ENCODE measurements at regions of chr3 and their contacts with region 1.

Region 1: GRCh38 chr3:53202331-53203015 is 41.5 kb downstream of the PRKCD start:
- DNase-seq: no peak
- H3K4me3 ChIP-seq: no peak overlapping the region
- H3K27ac ChIP-seq: no peak overlapping the region
- H3K4me1 ChIP-seq: no peaks in the 10 kb centered on the region
- H3K27me3 ChIP-seq: no peaks in the 10 kb centered on the region
- CTCF ChIP-seq: no peak
- EP300 ChIP-seq: no peak
- POLR2A ChIP-seq: no peak

Region 2: DNA sequence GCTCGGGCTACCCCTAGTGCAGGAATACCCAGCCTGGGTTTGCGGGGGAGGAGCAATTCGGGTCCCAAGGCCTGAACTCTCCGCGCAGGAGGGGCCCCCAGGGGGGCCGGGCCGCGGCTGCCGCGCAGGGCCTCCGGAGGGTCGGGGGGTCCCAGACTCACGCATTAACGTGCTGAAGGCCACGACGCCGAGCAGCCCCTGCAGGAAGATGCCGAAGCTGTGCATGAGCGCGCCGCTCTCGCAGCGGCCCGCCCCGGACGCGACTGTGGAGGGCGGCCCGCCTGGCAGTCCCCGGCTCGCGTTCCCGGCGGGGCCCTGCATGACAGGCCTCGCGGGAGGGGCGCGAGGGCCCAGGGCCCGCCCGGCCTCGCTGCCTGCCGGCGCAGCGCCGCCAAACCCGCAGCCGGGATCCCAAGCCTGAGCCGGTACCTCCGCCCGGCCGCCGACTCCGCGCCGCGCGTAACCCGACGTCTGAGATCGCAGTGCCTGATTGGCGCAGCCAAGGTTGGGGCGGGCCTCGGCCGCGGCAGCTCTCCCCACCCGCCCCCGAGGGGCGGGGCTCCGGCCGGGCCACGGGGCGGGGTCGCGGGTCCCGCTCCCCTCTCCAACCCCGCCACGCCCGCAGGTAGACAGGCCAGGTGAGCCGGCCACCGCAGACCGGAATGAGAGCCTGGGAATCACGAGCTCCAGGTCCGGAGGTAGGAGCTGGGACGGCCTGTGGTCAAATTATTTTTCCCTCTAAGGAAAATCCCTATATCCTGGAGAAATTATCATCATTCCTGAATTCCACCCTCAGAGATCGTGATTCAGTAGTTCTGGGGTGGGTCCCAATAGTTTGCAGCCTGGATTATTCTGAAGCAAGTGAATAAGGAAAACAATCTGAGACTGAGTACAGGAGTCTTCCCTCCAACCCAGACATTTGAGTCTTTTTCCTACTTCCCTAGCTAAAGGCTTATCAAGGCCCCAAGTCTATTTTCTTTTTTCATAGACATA is 305.0 kb before region 1 on chr3 and contains the start of gene STIMATE:
- intact Hi-C with region 1: no loop called
- DNase-seq: peak; percentile 92 to 96
- H3K4me3 ChIP-seq: peak within 1 kb of the TSS; percentile 73 to 94 (median 91)
- H3K27ac ChIP-seq: peak within 1 kb of the TSS; percentile 65 to 88 (median 84)
- H3K4me1 ChIP-seq: peaks cover 43 to 53% (median 48%) of the 10 kb centered on the region in 4 donors
- H3K27me3 ChIP-seq: no peaks in the 10 kb centered on the region
- CTCF ChIP-seq: no peak
- EP300 ChIP-seq: no peak
- POLR2A ChIP-seq: no peak
- total RNA-seq, gene STIMATE: 10.0 to 121 (median 20.1) TPM

Region 3: DNA sequence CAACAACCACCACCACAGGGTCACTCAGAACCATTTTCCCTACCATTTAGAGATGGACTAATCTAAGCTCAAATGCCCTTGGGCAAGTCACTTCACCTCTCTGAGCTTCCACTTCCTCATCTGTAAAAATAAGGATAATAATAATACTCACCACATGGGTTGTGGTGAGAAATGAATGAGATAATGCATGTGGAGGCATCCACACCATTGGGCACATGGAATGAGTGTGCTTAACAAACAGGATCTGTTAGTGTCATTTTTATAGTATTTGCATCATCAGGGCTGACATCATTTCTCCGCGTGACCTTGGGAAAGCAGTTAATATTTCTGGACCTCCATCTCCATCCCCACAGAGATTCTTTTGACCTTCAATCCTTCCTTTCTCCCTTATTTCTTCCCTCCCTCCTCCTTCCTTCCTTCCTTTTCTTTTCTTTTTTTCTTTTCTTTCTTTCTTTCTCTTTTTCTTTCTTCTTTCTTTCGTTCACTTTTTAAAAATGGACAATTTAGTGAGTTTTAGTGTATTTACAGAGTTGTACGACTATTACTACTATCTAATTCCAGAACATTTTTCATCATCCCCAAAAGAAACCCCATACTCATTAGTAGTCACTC is 64.5 kb before region 1 on chr3:
- intact Hi-C with region 1: loop called (anchors 2 kb)
- DNase-seq: no peak
- H3K4me3 ChIP-seq: no peak overlapping the region
- H3K27ac ChIP-seq: no peak overlapping the region
- H3K4me1 ChIP-seq: peaks cover 4 to 26% (median 13%) of the 10 kb centered on the region in 4 donors
- H3K27me3 ChIP-seq: no peaks in the 10 kb centered on the region
- CTCF ChIP-seq: no peak
- EP300 ChIP-seq: no peak
- POLR2A ChIP-seq: no peak

Region 4: GRCh38 chr3:53166781-53167291 is 35.6 kb before region 1 on chr3:
- intact Hi-C with region 1: no loop called
- DNase-seq: peak; percentile 57 to 70
- H3K4me3 ChIP-seq: peak overlapping the region in 2 of 4 donors; percentile 23 to 31
- H3K27ac ChIP-seq: peak overlapping the region; percentile 33 to 77 (median 49)
- H3K4me1 ChIP-seq: peaks cover 63 to 100% (median 95%) of the 10 kb centered on the region in 4 donors
- H3K27me3 ChIP-seq: no peaks in the 10 kb centered on the region
- CTCF ChIP-seq: no peak
- EP300 ChIP-seq: no peak
- POLR2A ChIP-seq: no peak

Region 5: GRCh38 chr3:53287131-53287629 is 84.7 kb after region 1 on chr3:
- intact Hi-C with region 1: no loop called
- DNase-seq: peak in 1 of 2 donors; percentile 20
- H3K4me3 ChIP-seq: no peak overlapping the region
- H3K27ac ChIP-seq: peak overlapping the region in 1 of 5 donors; percentile 60
- H3K4me1 ChIP-seq: peaks cover 0 to 19% (median 4%) of the 10 kb centered on the region in 4 donors
- H3K27me3 ChIP-seq: no peaks in the 10 kb centered on the region
- CTCF ChIP-seq: no peak
- EP300 ChIP-seq: no peak
- POLR2A ChIP-seq: no peak